Right cardiac atrium (tissue), 5 donors: ENCODE measurements at regions of chr2 and their contacts with region 1.

Region 1: GRCh38 chr2:88590998-88591613 is 36.2 kb downstream of the EIF2AK3 start:
- DNase-seq: no peak
- ATAC-seq: peak; percentile 75 to 78
- H3K4me3 ChIP-seq: no peak overlapping the region
- H3K27ac ChIP-seq: no peak overlapping the region
- H3K4me1 ChIP-seq: no peaks in the 10 kb centered on the region
- H3K27me3 ChIP-seq: no peaks in the 10 kb centered on the region

Region 2: DNA sequence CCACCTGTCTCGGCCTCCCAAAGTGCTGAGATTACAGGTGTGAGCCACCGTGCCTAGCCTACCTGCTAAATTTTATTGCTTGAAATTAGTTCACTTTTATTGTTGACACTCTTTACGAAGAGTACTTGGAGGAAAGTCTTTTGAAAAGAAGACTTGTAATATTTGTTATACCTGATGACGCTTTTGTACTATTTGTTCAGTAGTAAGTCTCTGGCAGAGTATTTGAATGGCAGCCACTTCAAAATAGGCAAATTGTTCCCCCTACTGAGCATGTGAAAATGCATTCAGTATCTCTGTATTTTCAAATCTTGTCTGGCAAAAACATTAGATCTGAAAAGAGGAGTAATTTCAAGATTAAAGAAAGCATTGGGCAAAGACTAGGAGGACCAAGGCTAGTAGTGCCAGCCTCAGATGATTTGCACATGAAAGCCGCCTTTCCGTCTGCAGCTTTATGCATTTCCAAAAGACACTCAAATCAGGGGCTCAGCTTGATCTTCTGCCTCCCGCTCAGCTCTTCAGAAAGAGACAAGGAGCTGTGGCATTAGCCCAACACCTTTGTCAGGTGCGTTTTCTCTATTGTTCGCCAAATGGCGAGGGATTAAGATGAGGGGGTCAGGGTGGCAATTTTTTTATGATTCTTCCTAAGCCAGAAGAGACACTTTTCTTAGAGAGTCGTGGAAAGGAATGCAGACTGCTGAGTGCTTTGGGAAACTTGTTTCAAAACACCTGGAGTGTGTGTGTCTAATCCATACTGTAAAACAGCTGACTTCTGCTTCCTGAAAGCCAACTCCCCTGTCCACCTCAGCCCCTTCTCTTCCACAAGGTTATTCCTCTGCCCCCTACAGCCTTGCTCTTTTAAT is 119.8 kb before region 1 on chr2:
- intact Hi-C with region 1: no loop called
- DNase-seq: no peak
- ATAC-seq: no peak
- H3K4me3 ChIP-seq: no peak overlapping the region
- H3K27ac ChIP-seq: no peak overlapping the region
- H3K4me1 ChIP-seq: no peaks in the 10 kb centered on the region
- H3K27me3 ChIP-seq: no peaks in the 10 kb centered on the region

Region 3: DNA sequence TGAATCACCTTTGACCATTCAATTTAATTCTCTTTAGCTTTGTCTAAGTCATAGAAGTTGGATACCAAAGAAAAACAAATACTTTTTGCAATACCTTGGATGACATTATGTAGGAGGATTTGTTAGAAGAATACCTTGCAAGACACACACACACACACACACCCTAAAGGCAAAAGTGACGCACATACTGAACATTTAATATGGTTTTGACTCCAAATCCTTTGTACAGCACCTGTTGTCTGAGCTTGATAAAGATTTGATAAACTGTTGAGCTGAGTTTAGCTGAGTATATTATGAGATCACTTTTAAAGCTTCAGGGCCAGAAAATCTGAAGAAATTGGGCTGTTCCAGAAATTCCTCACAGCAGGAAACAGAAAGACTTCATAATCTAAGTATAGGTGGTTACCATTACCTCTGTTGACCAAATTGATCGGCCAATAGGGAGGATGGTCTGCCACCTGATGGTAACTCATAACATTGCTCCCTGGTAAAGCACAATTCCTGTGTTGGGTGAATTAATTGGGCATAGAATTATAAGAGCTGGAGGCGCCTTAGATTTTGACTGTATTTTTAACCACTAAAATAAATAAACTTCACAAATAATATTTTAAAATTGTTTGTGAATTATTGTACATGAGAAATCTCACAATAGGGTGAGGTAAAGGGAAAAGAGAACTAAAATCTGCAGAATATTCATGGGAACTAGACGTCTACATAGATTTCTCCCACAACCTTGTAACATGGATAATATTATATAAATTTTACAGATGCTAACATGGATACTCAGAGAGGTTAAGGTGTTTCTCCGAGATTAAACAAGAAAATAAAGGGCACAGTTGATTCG is 78.5 kb after region 1 on chr2:
- intact Hi-C with region 1: loop called (anchors 2 to 5 kb)
- DNase-seq: no peak
- ATAC-seq: peak; percentile 59 to 66
- H3K4me3 ChIP-seq: no peak overlapping the region
- H3K27ac ChIP-seq: no peak overlapping the region
- H3K4me1 ChIP-seq: no peaks in the 10 kb centered on the region
- H3K27me3 ChIP-seq: no peaks in the 10 kb centered on the region